ENCODE measurements at regions of chr5 and their contacts with region 1.

Region 1: DNA sequence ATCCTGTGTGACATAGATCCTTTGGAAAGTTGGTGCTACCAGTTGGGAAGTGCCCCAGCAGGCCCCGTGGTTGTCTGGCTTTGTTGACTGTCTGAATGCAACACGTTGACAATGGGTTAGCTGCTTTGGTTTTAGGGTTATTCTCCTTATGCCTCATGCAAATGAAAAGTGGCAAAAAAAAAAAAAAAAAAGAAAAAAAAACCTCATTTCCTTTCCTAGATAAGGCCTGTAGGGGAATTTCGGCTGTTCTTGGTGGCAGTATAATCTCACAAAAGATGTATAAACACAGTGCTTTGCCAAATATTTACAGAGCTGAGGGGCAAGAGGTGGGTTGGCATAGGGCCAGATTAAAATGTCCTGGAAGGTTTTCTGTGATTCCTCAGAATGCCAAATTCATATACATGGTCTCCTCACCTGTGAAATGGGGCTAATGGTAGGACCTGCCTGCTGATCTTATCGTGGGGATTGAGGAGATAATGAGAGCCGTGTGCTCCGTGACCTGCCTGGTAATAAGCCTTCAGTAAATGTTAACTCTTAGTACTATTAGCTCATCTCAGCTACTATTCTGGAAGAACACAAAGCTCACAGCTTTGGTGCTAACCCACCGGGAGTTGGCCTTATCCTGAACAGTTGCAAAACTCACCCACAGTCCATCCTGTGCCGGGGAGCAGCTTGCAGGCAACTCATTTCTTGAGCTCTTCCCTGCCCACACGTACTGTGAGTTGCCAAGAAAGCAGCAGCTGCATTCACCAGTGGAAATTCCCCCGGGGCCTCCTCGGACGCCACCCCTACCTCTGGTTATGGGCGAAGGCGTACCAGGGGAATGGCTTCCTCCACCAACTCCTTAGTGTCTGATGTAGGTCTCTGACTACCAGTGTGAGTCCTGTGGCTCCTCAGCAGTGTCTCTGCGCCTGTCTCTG is 220.3 kb downstream of the NR3C1 start:
- DNase-seq: peak; percentile 85
- H3K4me3 Mint-ChIP-seq: peak overlapping the region; percentile 73
- H3K27ac Mint-ChIP-seq: peak overlapping the region; percentile 97
- H3K4me1 Mint-ChIP-seq: peaks cover 59% of the 10 kb centered on the region
- H3K27me3 Mint-ChIP-seq: no peaks in the 10 kb centered on the region

Region 2: DNA sequence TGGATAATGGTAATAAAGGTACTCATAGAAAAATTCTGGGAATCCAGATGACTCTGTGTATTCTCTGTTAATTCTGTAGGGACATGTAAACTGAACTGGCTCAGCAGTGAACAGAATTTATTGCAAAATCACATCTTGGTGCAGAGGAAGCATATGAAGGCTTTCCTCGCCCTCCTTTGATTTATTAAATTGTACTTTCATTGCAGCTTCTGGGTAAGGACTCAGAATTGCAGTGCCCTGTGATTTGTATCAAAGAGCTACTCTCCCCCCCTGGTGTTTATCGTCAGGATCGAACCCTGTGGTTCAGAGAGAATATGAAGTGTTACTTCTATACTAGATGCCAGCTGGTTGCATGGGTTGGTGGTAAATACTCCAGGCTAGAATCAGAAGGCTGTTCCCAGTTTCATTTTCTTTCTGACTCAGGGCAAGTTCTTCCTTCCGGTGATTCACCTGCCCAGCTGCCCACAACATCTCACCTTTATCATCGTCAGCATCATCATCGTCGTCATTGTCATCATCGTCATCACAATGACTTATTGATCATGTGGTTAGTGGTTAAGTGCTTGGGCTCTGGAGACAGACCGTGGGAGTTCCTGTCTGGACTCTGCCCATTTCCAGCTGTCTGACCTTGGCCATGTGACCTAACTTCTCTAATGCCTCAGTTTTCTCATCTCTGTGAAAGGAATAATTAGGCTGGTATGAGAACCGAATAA is 174.2 kb before region 1 on chr5:
- intact Hi-C with region 1: loop called (anchors 1 kb)
- DNase-seq: peak; percentile 94
- H3K4me3 Mint-ChIP-seq: peak overlapping the region; percentile 36
- H3K27ac Mint-ChIP-seq: peak overlapping the region; percentile 93
- H3K4me1 Mint-ChIP-seq: peaks cover 73% of the 10 kb centered on the region
- H3K27me3 Mint-ChIP-seq: peaks cover 3% of the 10 kb centered on the region

Region 3: GRCh38 chr5:143057580-143057999 is 125.6 kb before region 1 on chr5:
- intact Hi-C with region 1: loop called (anchors 1 kb)
- DNase-seq: no peak
- H3K4me3 Mint-ChIP-seq: no peak overlapping the region
- H3K27ac Mint-ChIP-seq: peak overlapping the region; percentile 95
- H3K4me1 Mint-ChIP-seq: peaks cover 62% of the 10 kb centered on the region
- H3K27me3 Mint-ChIP-seq: no peaks in the 10 kb centered on the region

Region 4: GRCh38 chr5:143101121-143101520 is 82.0 kb before region 1 on chr5:
- intact Hi-C with region 1: loop called (anchors 1 kb)
- DNase-seq: peak; percentile 76
- H3K4me3 Mint-ChIP-seq: peak overlapping the region; percentile 58
- H3K27ac Mint-ChIP-seq: peak overlapping the region; percentile 92
- H3K4me1 Mint-ChIP-seq: peaks cover 46% of the 10 kb centered on the region
- H3K27me3 Mint-ChIP-seq: no peaks in the 10 kb centered on the region

Region 5: DNA sequence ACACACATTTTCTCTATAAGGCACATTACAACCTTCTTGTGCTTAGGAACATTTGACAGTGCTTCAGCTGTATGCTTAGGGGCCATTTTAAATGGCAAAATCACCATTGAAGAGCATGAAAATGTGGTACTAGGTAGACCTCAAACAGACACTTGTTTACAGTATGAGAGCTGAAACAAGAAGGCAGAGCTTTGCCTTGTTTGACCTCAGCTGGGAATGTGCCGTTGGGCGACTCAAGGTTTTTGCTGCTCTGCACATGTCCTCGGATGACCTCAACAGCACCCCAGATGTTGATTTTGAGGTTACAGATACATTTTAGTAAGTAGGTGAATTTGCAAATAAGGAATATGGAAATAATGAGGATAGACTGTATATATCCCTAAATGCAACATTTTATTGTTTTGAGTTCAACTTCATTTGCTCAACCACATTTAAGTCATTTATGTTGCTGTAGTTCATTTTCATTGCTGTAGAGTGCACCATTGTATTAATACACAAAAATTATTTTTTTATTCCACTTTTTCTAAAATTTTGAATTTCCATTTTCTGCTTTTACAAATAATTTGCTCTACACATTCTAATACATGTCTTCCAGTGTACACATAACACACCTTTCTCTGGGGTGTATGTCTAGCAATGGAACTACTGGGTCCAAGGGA is 13.6 kb after region 1 on chr5:
- intact Hi-C with region 1: loop called (anchors 1 kb)
- DNase-seq: no peak
- H3K4me3 Mint-ChIP-seq: no peak overlapping the region
- H3K27ac Mint-ChIP-seq: peak overlapping the region; percentile 81
- H3K4me1 Mint-ChIP-seq: peaks cover 12% of the 10 kb centered on the region
- H3K27me3 Mint-ChIP-seq: no peaks in the 10 kb centered on the region

Region 6: GRCh38 chr5:143262393-143263174 is 79.4 kb after region 1 on chr5:
- intact Hi-C with region 1: loop called (anchors 2 kb)
- DNase-seq: no peak
- H3K4me3 Mint-ChIP-seq: no peak overlapping the region
- H3K27ac Mint-ChIP-seq: no peak overlapping the region
- H3K4me1 Mint-ChIP-seq: peaks cover 12% of the 10 kb centered on the region
- H3K27me3 Mint-ChIP-seq: no peaks in the 10 kb centered on the region

Region 7: DNA sequence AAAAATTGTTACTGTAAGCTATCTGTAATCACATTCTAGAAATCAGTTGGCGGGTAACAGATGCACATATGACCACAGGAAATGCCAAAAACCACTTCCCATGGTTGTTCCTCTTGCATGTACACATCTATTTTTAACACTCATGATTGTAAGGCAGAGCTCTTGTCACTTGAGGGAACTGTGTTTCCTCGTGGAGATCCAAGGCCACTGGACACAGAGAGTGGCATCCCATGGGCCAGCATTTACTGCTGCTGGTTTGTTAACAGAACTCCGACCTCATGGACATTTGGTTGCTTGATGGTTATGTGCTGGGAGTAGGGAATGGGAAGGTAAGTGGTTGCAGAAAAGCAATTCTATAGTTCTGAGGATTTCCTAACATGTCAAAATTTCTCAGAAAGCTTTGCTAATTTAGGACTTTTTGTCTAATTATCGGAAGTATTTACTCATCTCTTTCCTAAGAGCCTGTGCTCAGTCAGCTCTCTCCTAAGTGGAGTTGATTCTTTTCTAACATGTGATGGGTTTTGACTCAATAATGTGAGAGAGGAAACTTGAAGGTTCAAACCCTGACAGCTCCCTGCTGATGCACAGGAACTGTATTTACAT is 422.3 kb after region 1 on chr5:
- intact Hi-C with region 1: loop called (anchors 1 kb)
- DNase-seq: peak; percentile 83
- H3K4me3 Mint-ChIP-seq: peak overlapping the region; percentile 68
- H3K27ac Mint-ChIP-seq: peak overlapping the region; percentile 94
- H3K4me1 Mint-ChIP-seq: peaks cover 31% of the 10 kb centered on the region
- H3K27me3 Mint-ChIP-seq: peaks cover 4% of the 10 kb centered on the region

Measured in activated CD4-positive, alpha-beta T cell treated with anti-CD3 and anti-CD28 coated beads, Interleukin-2, amount 10 ng/mL, durations not matched to agents 24 days and 14 days (primary cell).